Activated CD4-positive, alpha-beta T cell treated with anti-CD3 and anti-CD28 coated beads, Interleukin-2, amount 10 ng/mL, durations not matched to agents 24 days and 14 days (primary cell): ENCODE measurements at regions of chr5 and their contacts with region 1.

Region 1: GRCh38 chr5:55072666-55073065 is 29.8 kb upstream of the GZMA start:
- DNase-seq: peak; percentile 83
- H3K4me3 Mint-ChIP-seq: peak overlapping the region; percentile 65
- H3K27ac Mint-ChIP-seq: peak overlapping the region; percentile 87
- H3K4me1 Mint-ChIP-seq: peaks cover 41% of the 10 kb centered on the region
- H3K27me3 Mint-ChIP-seq: no peaks in the 10 kb centered on the region

Region 2: DNA sequence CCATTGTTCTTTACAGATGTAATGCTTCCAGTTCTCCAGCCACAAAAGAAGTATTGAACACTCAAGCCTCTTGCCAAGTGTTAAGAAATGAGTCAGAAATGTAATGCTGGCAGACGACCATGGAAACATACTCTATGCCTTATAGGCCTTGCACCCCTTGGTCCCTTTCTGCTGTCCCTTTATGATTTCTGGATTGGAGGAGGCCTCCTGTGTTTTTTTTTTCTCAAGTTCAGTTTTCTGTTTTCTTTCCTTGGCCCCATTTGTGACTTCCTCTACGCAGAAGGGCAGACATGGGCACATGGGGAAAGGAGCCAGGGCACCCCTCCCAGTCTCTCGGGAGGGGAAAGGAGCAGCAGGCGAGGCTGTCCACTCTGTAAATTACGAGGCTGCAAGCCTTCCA is 501.8 kb before region 1 on chr5:
- intact Hi-C with region 1: no loop called
- DNase-seq: no peak
- H3K4me3 Mint-ChIP-seq: no peak overlapping the region
- H3K27ac Mint-ChIP-seq: no peak overlapping the region
- H3K4me1 Mint-ChIP-seq: peaks cover 10% of the 10 kb centered on the region
- H3K27me3 Mint-ChIP-seq: no peaks in the 10 kb centered on the region

Region 3: DNA sequence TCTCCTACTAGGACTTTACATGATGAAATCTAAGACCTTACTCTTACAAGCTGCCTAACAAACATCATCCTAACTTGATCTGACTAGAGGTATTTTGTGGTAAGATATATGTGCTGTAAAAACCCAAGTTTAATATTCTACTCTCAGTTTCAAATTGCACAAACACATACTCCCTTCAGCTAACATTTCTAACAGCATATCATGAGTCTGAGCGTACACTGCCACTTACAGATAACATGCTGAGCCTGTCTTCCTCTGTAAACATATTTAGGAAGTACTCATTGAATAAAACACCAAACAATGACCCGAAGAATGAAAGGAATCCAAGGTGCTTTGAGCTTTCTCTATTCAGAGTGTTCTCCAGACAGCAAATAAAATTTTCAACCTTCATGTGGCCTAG is 79.3 kb before region 1 on chr5:
- intact Hi-C with region 1: no loop called
- DNase-seq: no peak
- H3K4me3 Mint-ChIP-seq: no peak overlapping the region
- H3K27ac Mint-ChIP-seq: no peak overlapping the region
- H3K4me1 Mint-ChIP-seq: peaks cover 29% of the 10 kb centered on the region
- H3K27me3 Mint-ChIP-seq: peaks cover 8% of the 10 kb centered on the region

Region 4: GRCh38 chr5:55037046-55037771 is 35.5 kb before region 1 on chr5:
- intact Hi-C with region 1: loop called (anchors 1 kb)
- DNase-seq: peak; percentile 90
- H3K4me3 Mint-ChIP-seq: peak overlapping the region; percentile 35
- H3K27ac Mint-ChIP-seq: peak overlapping the region; percentile 85
- H3K4me1 Mint-ChIP-seq: peaks cover 47% of the 10 kb centered on the region
- H3K27me3 Mint-ChIP-seq: no peaks in the 10 kb centered on the region

Region 5: DNA sequence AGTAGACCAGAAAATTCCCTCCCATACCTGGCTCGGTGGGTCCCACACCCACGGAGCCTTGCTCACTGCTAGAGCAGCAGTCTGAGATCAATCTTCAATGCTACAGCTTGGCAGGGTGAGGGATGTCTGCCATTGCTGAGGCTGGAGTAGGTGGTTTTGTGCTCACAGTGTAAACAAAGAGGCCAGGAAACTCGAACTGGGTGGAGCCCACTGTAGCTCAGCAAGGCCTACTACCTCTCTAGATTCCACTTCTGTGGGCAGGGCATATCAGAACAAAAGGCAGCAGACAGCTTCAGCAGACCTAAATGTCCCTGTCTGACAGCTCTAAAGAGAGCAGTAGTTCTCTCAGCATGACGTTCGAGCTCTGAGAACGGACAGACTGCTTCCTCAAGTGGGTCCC is 24.2 kb after region 1 on chr5:
- intact Hi-C with region 1: loop called (anchors 1 kb)
- DNase-seq: peak; percentile 88
- H3K4me3 Mint-ChIP-seq: peak overlapping the region; percentile 64
- H3K27ac Mint-ChIP-seq: peak overlapping the region; percentile 86
- H3K4me1 Mint-ChIP-seq: peaks cover 84% of the 10 kb centered on the region
- H3K27me3 Mint-ChIP-seq: peaks cover 1% of the 10 kb centered on the region

Region 6: DNA sequence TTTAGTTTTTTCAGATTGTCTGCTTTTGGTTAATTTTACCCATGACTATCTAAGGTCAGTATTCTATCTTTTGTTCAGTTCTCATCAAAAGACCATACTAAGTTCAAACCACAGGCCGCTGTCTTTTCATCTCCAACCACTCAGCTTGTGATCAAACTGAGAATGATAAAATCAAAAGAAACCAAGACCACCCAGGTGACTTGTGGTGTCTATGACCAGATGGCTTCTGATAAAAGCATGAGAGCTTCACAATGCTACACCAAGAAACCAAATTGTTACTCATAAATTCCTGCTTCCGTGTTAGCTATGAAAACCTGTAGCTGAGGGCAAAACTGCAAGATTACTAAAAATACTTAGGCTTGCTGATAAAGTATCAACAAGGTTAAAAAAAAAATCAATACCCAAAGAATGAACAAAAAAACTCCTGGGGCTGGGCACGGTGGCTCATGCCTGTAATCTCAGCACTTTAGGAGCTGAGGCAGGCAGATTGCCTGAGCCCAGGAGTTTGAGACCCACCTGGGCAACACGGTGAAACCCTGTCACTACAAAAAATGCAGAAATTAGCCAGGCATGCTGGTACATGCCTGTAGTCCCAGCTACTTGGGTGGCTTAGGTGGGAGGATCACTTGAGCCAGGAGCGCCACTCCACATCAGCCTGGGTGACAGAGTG is 61.5 kb after region 1 on chr5:
- intact Hi-C with region 1: loop called (anchors 2 kb)
- DNase-seq: peak; percentile 71
- H3K4me3 Mint-ChIP-seq: peak overlapping the region; percentile 14
- H3K27ac Mint-ChIP-seq: peak overlapping the region; percentile 6
- H3K4me1 Mint-ChIP-seq: peaks cover 20% of the 10 kb centered on the region
- H3K27me3 Mint-ChIP-seq: peaks cover 15% of the 10 kb centered on the region

Region 7: DNA sequence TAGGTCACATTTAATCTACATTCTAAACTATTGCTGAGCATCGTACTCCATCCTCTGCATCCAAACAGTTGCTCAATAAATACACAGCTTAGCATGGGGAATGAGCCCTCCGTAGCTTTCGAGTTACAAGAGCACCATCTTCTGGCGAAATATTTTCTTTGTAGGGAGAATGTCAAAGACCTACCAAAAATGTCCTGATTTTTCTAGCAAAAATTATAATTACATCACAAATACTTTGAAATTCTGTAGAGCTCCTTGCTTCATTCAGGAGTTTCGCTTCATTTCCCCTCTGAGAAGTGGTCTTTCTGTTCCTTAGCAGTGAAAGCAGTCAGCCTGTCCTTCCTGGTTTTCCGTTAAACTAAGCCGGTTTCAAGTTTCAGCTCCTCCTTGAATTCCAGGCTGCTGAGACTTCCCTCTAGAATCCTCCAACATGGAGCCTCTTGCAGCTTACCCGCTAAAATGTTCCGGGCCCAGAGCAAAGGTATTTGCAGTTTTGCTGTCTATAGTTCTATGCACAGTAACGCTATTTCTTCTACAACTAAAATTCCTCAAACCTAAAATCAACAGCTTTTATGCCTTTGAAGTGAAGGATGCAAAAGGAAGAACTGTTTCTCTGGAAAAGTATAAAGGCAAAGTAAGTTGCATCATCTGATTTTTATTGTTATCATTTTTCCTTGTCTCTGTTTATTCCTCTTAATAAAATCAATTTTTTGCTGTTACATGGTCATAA is 87.3 kb after region 1 on chr5 and contains the start of gene GPX8:
- intact Hi-C with region 1: no loop called
- DNase-seq: peak; percentile 83
- H3K4me3 Mint-ChIP-seq: no peak within 1 kb of the TSS
- H3K27ac Mint-ChIP-seq: no peak within 1 kb of the TSS
- H3K4me1 Mint-ChIP-seq: no peaks in the 10 kb centered on the region
- H3K27me3 Mint-ChIP-seq: peaks cover 60% of the 10 kb centered on the region
- total RNA-seq, gene GPX8: not detected in 2 replicates